Activated CD4-positive, alpha-beta T cell treated with anti-CD3 and anti-CD28 coated beads for 36 hours (primary cell): ENCODE measurements at regions of chr22 and their contacts with region 1.

Region 1: GRCh38 chr22:23786752-23787599 is at the start of gene SMARCB1:
- DNase-seq: peak; percentile 96
- ATAC-seq: peak; percentile 81
- H3K4me3 Mint-ChIP-seq: peak within 1 kb of the TSS; percentile 84
- H3K27ac Mint-ChIP-seq: peak within 1 kb of the TSS; percentile 94
- H3K4me1 Mint-ChIP-seq: peaks cover 30% of the 10 kb centered on the region
- H3K27me3 Mint-ChIP-seq: no peaks in the 10 kb centered on the region
- total RNA-seq, gene SMARCB1: 78.2 to 95.2 TPM

Region 2: GRCh38 chr22:23716811-23717801 is 69.9 kb before region 1 on chr22:
- CTCF ChIA-PET with region 1: no interaction called
- POLR2A ChIA-PET with region 1: no interaction called
- intact Hi-C with region 1: loop called in 1 of 2 experiments (anchors 1 kb)
- DNase-seq: peak; percentile 89
- ATAC-seq: peak; percentile 90
- H3K4me3 Mint-ChIP-seq: peak overlapping the region; percentile 73
- H3K27ac Mint-ChIP-seq: peak overlapping the region; percentile 73
- H3K4me1 Mint-ChIP-seq: peaks cover 24% of the 10 kb centered on the region
- H3K27me3 Mint-ChIP-seq: no peaks in the 10 kb centered on the region

Region 3: GRCh38 chr22:23750714-23751440 is 36.1 kb before region 1 on chr22 and contains the start of gene ZNF70:
- CTCF ChIA-PET with region 1: interaction called, 3 read pairs
- POLR2A ChIA-PET with region 1: no interaction called
- intact Hi-C with region 1: loop called (anchors 1 kb)
- DNase-seq: peak; percentile 91
- ATAC-seq: peak; percentile 99
- H3K4me3 Mint-ChIP-seq: peak within 1 kb of the TSS; percentile 77
- H3K27ac Mint-ChIP-seq: peak within 1 kb of the TSS; percentile 56
- H3K4me1 Mint-ChIP-seq: peaks cover 11% of the 10 kb centered on the region
- H3K27me3 Mint-ChIP-seq: peaks cover 2% of the 10 kb centered on the region
- total RNA-seq, gene ZNF70: 1.6 to 1.7 TPM

Region 4: GRCh38 chr22:23767673-23768548 is 19.1 kb before region 1 on chr22 and contains the start of gene CHCHD10:
- CTCF ChIA-PET with region 1: interaction called, 5 read pairs
- POLR2A ChIA-PET with region 1: interaction called, 5 read pairs
- intact Hi-C with region 1: loop called (anchors 1 kb)
- DNase-seq: peak; percentile 87
- ATAC-seq: peak; percentile 66
- H3K4me3 Mint-ChIP-seq: peak within 1 kb of the TSS; percentile 75
- H3K27ac Mint-ChIP-seq: peak within 1 kb of the TSS; percentile 72
- H3K4me1 Mint-ChIP-seq: peaks cover 36% of the 10 kb centered on the region
- H3K27me3 Mint-ChIP-seq: no peaks in the 10 kb centered on the region
- total RNA-seq, gene CHCHD10: 131 to 134 TPM

Region 5: DNA sequence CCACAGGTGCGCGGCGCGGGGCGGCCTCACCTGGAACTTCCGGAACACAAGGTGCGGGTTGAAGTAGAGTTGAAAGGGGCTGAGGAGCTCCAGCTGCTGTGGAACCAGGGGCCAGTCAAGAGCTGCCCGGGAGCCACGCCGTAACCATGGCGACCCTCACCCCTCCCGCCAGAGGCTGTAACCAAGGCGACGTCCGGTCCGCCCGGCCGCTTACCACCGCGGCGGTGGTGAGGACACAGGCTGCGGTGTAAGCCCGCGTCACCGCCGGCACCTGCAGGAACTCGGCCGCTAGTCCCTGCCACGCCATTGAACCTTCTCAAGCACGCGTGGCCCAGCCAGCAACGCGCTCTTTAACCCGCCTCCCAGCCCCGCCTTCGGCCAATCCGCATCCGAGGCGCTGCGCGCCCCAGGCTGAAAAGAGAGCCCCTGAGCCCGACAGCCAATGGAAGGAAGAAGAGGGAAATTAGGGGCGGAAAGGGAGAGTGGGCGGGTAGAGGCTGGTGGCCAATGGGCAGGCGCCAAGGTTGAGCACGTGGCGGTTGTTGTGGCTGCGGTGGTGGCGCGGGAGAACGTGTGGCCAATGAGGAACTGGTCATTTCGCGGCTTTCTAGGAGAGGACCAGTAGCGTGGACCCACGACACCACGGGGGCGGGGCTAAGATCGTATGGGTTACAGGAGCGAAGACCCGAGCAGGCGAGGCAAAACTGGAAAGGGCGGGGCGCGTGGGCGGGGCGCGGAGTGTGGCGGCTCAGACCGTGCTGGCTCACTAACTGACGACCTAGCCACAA is 51.9 kb after region 1 on chr22 and contains the start of gene DERL3:
- CTCF ChIA-PET with region 1: no interaction called
- POLR2A ChIA-PET with region 1: no interaction called
- intact Hi-C with region 1: loop called (anchors 1 to 2 kb)
- DNase-seq: peak; percentile 97
- ATAC-seq: peak; percentile 94
- H3K4me3 Mint-ChIP-seq: peak within 1 kb of the TSS; percentile 83
- H3K27ac Mint-ChIP-seq: peak within 1 kb of the TSS; percentile 80
- H3K4me1 Mint-ChIP-seq: peaks cover 19% of the 10 kb centered on the region
- H3K27me3 Mint-ChIP-seq: peaks cover 2% of the 10 kb centered on the region
- total RNA-seq, gene DERL3: 5.2 to 5.7 TPM

Region 6: DNA sequence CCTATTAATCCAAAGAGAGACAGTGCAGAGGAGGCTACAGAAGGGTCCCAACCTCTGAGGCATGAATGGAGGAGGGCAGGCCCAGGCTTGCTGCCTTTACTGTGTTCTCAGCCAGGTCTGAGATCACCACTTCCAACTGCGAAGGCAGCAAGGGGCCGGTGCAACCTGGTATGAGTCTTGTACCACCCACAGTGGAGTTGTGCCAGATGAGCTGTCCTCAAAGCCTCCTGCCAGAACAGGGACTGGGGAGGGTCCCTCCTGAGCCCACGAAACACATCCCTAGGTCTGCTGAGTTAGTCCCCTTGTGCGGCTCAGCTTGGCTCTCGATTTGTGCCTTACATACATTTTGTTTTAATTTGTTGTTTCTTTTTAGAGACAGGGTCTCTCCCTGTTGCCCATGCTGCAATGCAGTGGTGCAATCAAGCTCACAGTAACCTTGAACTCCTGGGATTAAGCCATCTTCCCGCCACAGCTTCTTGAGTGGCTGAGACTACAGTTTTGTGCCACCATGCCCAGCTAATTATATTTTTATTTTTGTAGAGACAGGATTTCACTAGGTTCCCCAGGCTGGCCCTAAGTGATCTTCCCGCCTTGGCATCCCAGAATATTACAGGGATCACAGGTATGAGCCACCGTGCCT is 116.5 kb after region 1 on chr22:
- CTCF ChIA-PET with region 1: no interaction called
- POLR2A ChIA-PET with region 1: no interaction called
- intact Hi-C with region 1: no loop called
- DNase-seq: no peak
- ATAC-seq: no peak
- H3K4me3 Mint-ChIP-seq: no peak overlapping the region
- H3K27ac Mint-ChIP-seq: no peak overlapping the region
- H3K4me1 Mint-ChIP-seq: no peaks in the 10 kb centered on the region
- H3K27me3 Mint-ChIP-seq: no peaks in the 10 kb centered on the region

Region 7: DNA sequence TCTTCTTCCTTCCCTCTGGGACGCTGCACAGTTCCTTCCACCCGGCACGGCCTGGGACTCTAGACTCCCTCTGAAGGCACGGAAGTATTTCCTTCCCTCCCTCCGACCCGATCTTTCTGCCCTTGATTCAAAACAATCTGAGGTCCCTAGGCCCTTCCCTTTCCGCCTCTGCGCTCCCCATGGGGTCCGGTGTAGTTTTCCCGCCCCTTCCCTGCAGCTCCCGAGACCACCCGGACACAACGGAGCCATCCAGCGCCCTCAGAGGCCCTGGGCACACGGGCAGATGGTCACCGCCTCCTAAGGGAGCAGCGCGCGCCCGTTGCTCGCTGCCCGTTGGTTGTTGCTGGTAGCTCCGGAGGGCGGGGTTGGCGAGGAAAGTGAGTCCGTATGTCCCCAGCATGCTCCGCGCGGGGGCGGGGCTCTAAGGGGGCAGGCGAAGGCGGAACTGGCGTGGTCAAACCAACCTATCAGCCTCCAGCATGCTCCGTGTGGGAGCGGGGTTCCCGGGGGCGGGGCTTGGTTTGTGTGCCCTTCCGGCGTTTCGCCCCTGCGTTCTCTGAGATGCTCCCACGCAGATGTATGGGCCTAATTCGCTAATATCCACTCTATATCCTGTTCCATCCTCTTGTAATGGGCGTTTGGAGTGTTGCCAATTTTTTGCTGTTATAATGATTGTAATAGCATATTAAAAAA is 126.8 kb after region 1 on chr22:
- CTCF ChIA-PET with region 1: no interaction called
- POLR2A ChIA-PET with region 1: no interaction called
- intact Hi-C with region 1: loop called in 1 of 2 experiments (anchors 1 kb)
- DNase-seq: peak; percentile 100
- ATAC-seq: peak; percentile 99
- H3K4me3 Mint-ChIP-seq: peak overlapping the region; percentile 85
- H3K27ac Mint-ChIP-seq: peak overlapping the region; percentile 98
- H3K4me1 Mint-ChIP-seq: peaks cover 23% of the 10 kb centered on the region
- H3K27me3 Mint-ChIP-seq: no peaks in the 10 kb centered on the region

Region 8: DNA sequence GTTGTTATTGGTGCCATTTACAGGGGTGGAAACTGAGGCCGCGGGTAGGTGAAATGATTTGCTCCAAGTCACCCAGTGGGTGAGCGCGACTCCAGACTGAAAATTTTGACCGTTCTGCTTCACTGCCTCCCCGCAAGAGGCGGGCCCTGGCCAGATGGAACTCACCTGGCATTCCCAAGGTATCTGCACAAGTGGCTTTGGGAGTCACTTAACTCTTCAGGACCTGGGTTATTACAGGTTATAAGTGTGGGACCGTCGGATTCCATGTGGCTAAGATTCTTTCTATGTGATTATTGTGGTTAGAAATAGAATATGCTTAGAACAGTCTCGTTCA is 224.7 kb after region 1 on chr22:
- CTCF ChIA-PET with region 1: no interaction called
- POLR2A ChIA-PET with region 1: no interaction called
- intact Hi-C with region 1: loop called in 1 of 2 experiments (anchors 1 kb)
- DNase-seq: no peak
- ATAC-seq: no peak
- H3K4me3 Mint-ChIP-seq: peak overlapping the region; percentile 92
- H3K27ac Mint-ChIP-seq: peak overlapping the region; percentile 94
- H3K4me1 Mint-ChIP-seq: peaks cover 27% of the 10 kb centered on the region
- H3K27me3 Mint-ChIP-seq: no peaks in the 10 kb centered on the region